ENCODE measurements at regions of chr6 and their contacts with region 1.

Region 1: DNA sequence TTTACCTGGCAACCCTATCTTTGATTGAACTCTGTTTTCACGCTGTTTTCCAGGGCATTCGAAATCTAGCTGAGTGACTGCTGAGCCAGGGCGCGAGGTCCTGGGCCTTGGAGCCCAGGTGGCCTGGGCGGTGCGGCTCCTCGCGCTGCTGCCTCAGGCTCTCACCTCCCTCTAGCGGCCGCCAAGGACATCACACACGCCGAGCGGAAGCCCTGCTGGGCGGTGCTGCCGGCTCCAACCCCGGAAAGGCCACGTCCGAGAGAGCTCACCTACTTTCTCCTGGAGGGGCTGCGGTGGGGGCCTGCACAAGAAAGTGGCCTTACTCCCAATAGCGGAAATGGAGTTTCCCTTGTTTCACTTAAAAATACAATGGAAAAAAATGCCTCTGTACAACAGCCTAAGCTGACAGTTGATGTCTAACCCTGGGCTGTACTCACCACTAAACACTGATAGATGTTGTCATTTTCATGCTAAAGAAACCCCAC is 77.7 kb downstream of the ELOVL4 start:
- DNase-seq: peak; percentile 65
- ATAC-seq: peak; percentile 100
- H3K4me3 Mint-ChIP-seq: peak overlapping the region; percentile 65
- H3K27ac Mint-ChIP-seq: no peak overlapping the region
- H3K4me1 Mint-ChIP-seq: peaks cover 10% of the 10 kb centered on the region
- H3K27me3 Mint-ChIP-seq: peaks cover 4% of the 10 kb centered on the region
- CTCF ChIP-seq: peak; percentile 71

Region 2: DNA sequence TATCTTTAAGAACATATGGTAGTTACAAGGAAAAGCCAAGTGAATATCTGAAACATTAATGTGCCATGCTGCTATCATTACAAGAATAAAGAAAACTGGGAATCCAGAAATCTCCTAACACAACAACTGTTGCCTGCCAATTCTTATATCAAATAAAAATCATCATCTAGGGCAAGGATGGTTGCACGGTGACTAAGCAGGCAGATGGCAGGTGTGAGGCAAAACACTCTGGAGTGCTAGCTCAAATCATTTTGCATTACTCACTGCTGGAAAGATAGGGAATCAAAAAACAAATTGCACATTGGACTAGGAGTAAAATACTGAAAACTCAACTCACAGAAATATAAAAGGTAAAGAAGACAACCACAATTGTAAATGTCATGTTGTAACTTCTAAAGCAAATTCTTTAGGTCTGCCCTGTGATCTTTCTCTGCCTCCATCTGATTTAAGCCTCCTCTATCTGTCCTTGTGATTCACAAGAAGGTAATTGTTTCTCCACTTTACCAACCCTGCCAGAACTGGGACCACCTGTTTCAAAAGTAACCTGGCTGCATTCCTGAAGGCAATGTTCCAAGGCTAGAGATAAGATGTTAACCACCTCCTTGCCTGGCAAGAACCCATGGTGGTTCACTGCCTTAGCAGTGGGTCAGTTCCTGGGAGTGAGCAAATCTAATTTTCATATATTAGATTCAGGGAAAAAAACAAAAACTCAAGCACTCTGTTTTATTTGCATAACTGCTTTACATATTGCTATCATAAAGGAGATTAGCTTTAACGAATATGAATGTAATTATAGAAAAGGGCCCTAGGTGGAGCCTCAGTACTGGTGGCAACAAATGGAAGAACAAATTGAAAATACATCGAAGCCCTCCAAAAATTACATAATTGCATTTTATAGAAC is 299.3 kb before region 1 on chr6:
- CTCF ChIA-PET with region 1: no interaction called
- POLR2A ChIA-PET with region 1: no interaction called
- intact Hi-C with region 1: loop called (anchors 2 kb)
- DNase-seq: no peak
- ATAC-seq: no peak
- H3K4me3 Mint-ChIP-seq: no peak overlapping the region
- H3K27ac Mint-ChIP-seq: no peak overlapping the region
- H3K4me1 Mint-ChIP-seq: peaks cover 3% of the 10 kb centered on the region
- H3K27me3 Mint-ChIP-seq: peaks cover 3% of the 10 kb centered on the region
- CTCF ChIP-seq: no peak